Ascending aorta (tissue), 2 donors: ENCODE measurements at regions of chr20 and their contacts with region 1.

Region 1: GRCh38 chr20:11544029-11544678 is 373.5 kb upstream of the BTBD3 start:
- DNase-seq: peak in 1 of 2 donors; percentile 62
- H3K4me3 ChIP-seq: peak overlapping the region; percentile 31 to 39
- H3K27ac ChIP-seq: no peak overlapping the region
- H3K4me1 ChIP-seq: peaks cover 0 to 2% of the 10 kb centered on the region in 2 donors
- H3K27me3 ChIP-seq: no peaks in the 10 kb centered on the region
- CTCF ChIP-seq: peak; percentile 43 to 64 (median 52)

Region 2: DNA sequence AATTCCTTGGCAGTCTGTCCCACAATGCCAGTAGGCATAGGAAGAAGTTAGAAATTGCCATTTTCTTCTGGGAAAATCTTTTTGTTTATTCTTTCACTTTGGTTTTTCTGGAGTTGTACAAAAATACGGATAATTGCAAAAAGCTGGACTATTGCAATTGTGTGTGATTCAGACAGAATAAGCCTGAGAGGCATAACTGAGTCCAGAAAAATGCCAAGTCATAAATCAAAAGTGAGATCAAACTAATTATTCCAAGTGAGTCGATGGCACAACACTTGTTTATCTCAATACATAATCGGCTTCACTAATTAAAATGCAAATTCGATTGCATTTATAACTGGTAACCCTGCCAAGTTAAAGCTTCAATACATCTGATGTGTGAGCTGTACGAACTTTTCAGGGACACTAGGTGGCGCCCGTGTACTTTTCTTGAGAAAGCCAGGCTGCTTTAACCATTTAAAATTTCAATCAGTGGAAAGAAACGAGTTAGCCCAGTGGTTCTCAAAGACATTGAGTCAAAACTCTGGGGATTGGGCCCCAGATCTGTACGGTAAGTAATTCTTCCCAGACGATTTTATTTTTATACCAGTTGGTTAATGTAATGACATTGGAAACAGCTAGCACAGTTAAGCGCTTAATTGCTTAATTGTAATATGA is 1927.2 kb before region 1 on chr20:
- intact Hi-C with region 1: loop called (anchors 1 kb)
- DNase-seq: peak in 1 of 2 donors; percentile 74
- H3K4me3 ChIP-seq: no peak overlapping the region
- H3K27ac ChIP-seq: no peak overlapping the region
- H3K4me1 ChIP-seq: no peaks in the 10 kb centered on the region
- H3K27me3 ChIP-seq: no peaks in the 10 kb centered on the region
- CTCF ChIP-seq: peak; percentile 64 to 92 (median 83)

Region 3: GRCh38 chr20:9978397-9979004 is 1565.7 kb before region 1 on chr20:
- intact Hi-C with region 1: loop called (anchors 1 kb)
- DNase-seq: peak in 1 of 2 donors; percentile 71
- H3K4me3 ChIP-seq: peak overlapping the region in 1 of 2 donors; percentile 48
- H3K27ac ChIP-seq: peak overlapping the region; percentile 10 to 17
- H3K4me1 ChIP-seq: no peaks in the 10 kb centered on the region
- H3K27me3 ChIP-seq: no peaks in the 10 kb centered on the region
- CTCF ChIP-seq: peak; percentile 72 to 80 (median 79)